Activated naive CD4-positive, alpha-beta T cell treated with anti-CD3 and anti-CD28 coated beads for 36 hours (primary cell): ENCODE measurements at regions of chr20 and their contacts with region 1.

Region 1: GRCh38 chr20:3204124-3204822 is at the start of gene DDRGK1:
- DNase-seq: peak; percentile 96
- H3K4me3 Mint-ChIP-seq: peak within 1 kb of the TSS; percentile 97
- H3K27ac Mint-ChIP-seq: peak within 1 kb of the TSS; percentile 97
- H3K4me1 Mint-ChIP-seq: peaks cover 18% of the 10 kb centered on the region
- H3K27me3 Mint-ChIP-seq: no peaks in the 10 kb centered on the region
- total RNA-seq, gene DDRGK1: 78.2 to 79.5 TPM

Region 2: DNA sequence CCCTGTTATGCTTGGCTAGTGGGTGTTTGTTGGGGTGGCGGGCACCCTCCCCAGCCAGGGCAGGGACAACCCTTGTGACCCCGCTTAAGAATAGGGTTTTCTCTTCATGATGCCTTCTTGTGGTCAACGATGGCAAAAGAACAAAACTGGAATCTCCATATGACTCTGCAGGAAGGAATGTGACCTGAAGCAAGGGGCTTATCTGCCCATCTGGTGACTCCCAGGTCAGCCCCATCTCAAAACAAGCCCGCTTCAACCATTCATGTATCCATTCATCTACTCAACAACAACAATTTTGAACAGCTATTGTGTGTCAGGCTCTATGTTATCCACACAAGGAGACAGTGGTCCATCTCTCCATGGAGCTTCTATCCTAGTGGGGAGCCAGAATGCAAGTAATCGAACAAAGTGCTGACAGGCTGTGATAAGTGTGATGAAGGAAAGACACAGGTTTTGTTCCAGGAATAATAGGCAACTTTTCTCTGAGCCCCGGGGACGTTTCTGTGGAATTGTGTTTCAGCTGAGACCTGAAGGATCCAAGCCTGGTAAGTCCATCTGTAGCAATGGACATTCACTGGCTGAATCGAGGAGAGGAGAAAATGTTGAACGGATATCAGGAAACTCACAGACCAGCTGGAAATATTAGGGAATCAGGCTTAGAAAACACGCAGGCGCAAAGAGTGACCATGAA is 854.3 kb before region 1 on chr20:
- CTCF ChIA-PET with region 1: no interaction called
- intact Hi-C with region 1: no loop called
- DNase-seq: no peak
- H3K4me3 Mint-ChIP-seq: no peak overlapping the region
- H3K27ac Mint-ChIP-seq: no peak overlapping the region
- H3K4me1 Mint-ChIP-seq: no peaks in the 10 kb centered on the region
- H3K27me3 Mint-ChIP-seq: peaks cover 13% of the 10 kb centered on the region

Region 3: DNA sequence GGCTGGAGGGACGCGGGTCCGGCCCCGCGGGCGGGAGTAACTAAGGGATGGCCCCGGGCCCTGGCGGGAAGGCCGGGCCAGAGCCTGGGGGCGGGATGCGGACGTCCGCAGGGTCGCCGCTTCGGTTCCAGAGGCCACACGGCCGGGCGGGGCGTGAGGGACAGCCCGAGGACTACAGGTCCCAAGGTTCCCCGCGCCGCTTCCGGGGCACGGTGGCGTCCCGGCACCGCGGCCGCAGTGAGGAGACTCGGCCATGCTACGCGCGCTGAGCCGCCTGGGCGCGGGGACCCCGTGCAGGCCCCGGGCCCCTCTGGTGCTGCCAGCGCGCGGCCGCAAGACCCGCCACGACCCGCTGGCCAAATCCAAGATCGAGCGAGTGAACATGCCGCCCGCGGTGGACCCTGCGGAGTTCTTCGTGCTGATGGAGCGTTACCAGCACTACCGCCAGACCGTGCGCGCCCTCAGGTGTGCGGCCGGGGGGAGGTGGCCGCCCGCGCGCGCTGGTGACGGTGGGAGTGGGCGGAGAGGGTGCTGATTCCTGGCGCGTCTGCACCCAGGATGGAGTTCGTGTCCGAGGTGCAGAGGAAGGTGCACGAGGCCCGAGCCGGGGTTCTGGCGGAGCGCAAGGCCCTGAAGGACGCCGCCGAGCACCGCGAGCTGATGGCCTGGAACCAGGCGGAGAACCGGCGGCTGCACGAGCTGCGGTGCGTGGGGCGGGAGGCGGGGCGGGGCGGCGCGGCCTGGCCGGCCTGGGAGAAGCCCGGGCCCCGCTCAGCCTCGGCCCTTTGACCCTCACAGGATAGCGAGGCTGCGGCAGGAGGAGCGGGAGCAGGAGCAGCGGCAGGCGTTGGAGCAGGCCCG is 158.2 kb before region 1 on chr20 and contains the start of gene MRPS26:
- CTCF ChIA-PET with region 1: no interaction called
- intact Hi-C with region 1: loop called (anchors 5 kb)
- DNase-seq: peak; percentile 84
- H3K4me3 Mint-ChIP-seq: peak within 1 kb of the TSS; percentile 83
- H3K27ac Mint-ChIP-seq: peak within 1 kb of the TSS; percentile 60
- H3K4me1 Mint-ChIP-seq: peaks cover 23% of the 10 kb centered on the region
- H3K27me3 Mint-ChIP-seq: no peaks in the 10 kb centered on the region
- total RNA-seq, gene MRPS26: 50.0 to 52.4 TPM

Region 4: DNA sequence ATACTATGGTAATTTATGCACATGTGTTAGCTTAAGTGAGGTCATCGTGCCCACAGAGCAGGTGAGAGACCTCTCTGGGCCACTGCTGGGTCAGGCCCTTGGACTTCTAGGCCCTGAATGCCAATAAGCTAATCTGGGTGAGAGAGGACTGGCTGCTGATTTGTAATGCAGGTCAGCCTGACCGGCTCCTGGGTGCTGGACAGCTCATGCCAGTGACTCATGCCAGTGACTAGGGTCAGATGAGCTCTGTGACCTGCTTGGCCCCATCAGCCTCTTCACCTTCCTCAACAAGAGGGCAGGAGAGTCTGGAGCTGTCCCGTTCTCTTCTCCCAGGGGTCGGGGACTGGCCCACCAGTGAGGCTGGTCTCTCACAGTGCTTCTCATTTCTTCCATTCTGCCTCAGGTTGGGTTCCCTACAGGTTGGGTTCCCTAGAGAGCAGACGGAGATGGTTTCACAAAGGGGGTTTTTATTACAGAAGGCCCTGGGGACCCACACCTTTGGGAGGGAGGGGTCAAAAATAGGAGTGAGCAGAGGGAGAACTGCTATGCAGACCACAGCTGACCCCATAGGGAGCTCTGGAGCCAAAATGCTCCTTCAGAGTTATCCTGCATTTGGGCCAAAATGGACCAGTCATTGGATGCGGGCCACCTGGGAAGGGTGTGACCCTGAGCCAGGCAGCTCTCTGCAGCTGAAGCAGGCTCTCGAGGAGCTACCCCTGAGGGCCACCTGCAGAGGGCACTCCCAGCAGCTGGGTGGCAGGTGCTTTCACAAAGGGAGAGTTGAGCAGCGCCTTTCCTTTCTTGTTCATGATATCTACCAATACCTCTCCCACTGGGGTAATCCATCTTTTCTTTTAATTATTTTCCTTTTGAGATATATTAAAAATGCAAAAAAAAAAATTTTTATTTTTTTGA is 135.0 kb before region 1 on chr20:
- CTCF ChIA-PET with region 1: no interaction called
- intact Hi-C with region 1: loop called (anchors 5 kb)
- DNase-seq: peak; percentile 62
- H3K4me3 Mint-ChIP-seq: no peak overlapping the region
- H3K27ac Mint-ChIP-seq: no peak overlapping the region
- H3K4me1 Mint-ChIP-seq: peaks cover 19% of the 10 kb centered on the region
- H3K27me3 Mint-ChIP-seq: no peaks in the 10 kb centered on the region

Region 5: DNA sequence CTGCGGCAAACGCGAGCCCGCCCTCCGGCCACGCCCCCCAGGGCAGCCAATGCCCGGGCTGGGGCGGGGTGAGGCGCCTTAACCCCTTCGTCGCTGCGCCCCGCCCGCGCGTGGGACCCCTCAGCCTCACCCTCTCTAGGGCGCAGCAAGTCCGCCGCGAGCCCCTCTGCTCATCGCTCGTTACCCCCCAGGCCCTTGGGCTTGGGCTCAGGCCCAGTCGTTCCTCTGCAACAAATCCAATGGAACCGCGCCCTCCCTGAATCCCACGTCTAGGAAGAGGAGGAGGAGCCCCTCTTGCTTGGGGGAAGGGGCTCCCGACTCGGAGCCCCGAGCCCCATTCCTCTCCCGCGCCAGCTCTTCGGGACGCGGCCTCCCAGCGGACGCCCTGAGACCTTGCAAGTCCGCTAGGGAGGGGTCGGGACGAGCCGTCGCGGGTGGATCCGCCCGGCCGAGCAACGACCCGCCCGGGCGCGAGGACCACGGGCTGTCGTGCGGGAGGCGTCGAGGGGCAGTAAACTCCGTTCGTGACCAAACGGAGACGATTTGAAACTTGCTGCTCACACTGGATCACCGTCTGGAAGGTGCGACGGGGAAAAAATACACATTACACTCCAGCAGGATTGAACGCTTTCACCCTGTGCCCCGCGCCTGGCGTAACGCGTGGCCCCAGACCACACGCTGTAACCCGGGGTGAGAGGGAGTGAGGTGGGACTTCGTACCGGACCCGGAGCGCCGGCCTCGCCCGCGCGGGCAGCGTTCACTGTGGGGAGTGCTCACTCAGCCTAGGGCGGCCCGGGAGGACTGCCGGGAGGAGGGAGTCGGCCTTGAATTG is 30.4 kb before region 1 on chr20:
- CTCF ChIA-PET with region 1: interaction called, 3 read pairs
- intact Hi-C with region 1: loop called (anchors 1 kb)
- DNase-seq: peak; percentile 89
- H3K4me3 Mint-ChIP-seq: peak overlapping the region; percentile 83
- H3K27ac Mint-ChIP-seq: no peak overlapping the region
- H3K4me1 Mint-ChIP-seq: peaks cover 12% of the 10 kb centered on the region
- H3K27me3 Mint-ChIP-seq: peaks cover 11% of the 10 kb centered on the region